Activated CD4-positive, alpha-beta memory T cell treated with anti-CD3 and anti-CD28 coated beads for 36 hours (primary cell): ENCODE measurements at regions of chr1 and their contacts with region 1.

Region 1: GRCh38 chr1:111656086-111657017 is 36.8 kb downstream of the RAP1A start:
- DNase-seq: no peak
- H3K4me3 Mint-ChIP-seq: no peak overlapping the region
- H3K27ac Mint-ChIP-seq: no peak overlapping the region
- H3K4me1 Mint-ChIP-seq: peaks cover 48% of the 10 kb centered on the region
- H3K27me3 Mint-ChIP-seq: no peaks in the 10 kb centered on the region

Region 2: DNA sequence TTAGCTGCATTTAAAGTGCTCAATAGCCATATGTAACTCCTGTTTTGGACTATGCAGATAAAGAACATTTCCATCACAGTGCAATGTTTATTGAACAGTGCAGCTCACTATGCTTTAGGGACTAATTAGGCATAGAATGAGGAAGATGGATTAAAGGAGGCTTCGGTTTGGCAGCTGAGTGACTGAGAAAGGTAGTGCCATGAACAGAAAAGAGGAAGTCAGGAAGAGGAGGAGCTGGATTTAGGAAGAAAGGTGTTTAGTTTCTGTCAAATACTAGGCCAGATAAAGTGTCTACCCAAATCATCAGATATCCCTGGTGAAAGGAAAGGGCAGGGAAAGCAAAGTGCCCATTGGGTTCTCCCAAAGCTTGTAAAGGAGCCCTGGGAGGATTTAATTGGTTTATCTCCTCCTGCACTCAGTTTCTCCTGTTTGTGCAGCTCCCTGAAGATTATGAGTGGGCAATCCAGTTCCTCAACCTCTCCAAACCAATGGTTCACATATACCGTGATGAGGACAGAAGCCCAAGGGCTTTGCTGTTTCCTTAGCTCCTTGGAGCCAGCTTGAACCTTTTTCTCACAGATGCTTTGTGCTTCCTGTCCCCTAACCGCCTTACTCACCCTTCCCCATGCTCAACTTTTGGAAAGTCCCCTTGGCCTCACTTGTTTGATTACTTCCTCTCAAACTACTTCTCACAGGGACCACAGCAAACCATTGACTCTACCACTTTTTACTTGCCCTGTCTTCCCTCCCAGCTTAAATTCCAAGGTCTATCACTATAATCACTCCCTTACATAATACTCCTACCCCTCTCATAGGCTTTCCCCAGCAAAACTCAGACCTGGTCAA is 40.3 kb before region 1 on chr1:
- CTCF ChIA-PET with region 1: no interaction called
- POLR2A ChIA-PET with region 1: no interaction called
- intact Hi-C with region 1: no loop called
- DNase-seq: peak; percentile 74
- H3K4me3 Mint-ChIP-seq: peak overlapping the region; percentile 42
- H3K27ac Mint-ChIP-seq: peak overlapping the region; percentile 92
- H3K4me1 Mint-ChIP-seq: peaks cover 37% of the 10 kb centered on the region
- H3K27me3 Mint-ChIP-seq: no peaks in the 10 kb centered on the region

Region 3: GRCh38 chr1:111628153-111628552 is 28.2 kb before region 1 on chr1:
- CTCF ChIA-PET with region 1: no interaction called
- POLR2A ChIA-PET with region 1: no interaction called
- intact Hi-C with region 1: loop called (anchors 5 kb)
- DNase-seq: no peak
- H3K4me3 Mint-ChIP-seq: peak overlapping the region; percentile 18
- H3K27ac Mint-ChIP-seq: peak overlapping the region; percentile 68
- H3K4me1 Mint-ChIP-seq: peaks cover 82% of the 10 kb centered on the region
- H3K27me3 Mint-ChIP-seq: no peaks in the 10 kb centered on the region

Region 4: GRCh38 chr1:111639602-111640198 is 16.7 kb before region 1 on chr1:
- CTCF ChIA-PET with region 1: no interaction called
- POLR2A ChIA-PET with region 1: interaction called, 3 read pairs
- intact Hi-C with region 1: loop called (anchors 2 kb)
- DNase-seq: no peak
- H3K4me3 Mint-ChIP-seq: no peak overlapping the region
- H3K27ac Mint-ChIP-seq: no peak overlapping the region
- H3K4me1 Mint-ChIP-seq: peaks cover 66% of the 10 kb centered on the region
- H3K27me3 Mint-ChIP-seq: no peaks in the 10 kb centered on the region

Region 5: DNA sequence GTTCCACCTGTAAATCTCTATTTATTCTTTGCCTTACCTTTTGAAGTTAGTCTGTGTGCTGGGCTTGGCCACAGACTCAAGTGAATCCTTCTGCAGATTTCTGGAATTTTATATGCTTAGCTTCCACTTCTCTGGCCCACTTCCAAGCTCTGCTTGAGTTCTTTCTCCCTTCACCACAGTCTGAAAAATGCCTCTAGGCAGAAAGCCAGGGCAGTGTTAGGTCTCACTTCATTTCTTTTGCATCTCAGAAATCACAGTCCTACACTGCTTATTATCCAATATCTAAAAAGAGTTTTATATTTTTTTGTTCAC is 33.9 kb after region 1 on chr1:
- CTCF ChIA-PET with region 1: no interaction called
- POLR2A ChIA-PET with region 1: no interaction called
- intact Hi-C with region 1: no loop called
- DNase-seq: no peak
- H3K4me3 Mint-ChIP-seq: no peak overlapping the region
- H3K27ac Mint-ChIP-seq: no peak overlapping the region
- H3K4me1 Mint-ChIP-seq: peaks cover 55% of the 10 kb centered on the region
- H3K27me3 Mint-ChIP-seq: no peaks in the 10 kb centered on the region

Region 6: GRCh38 chr1:111704776-111705175 is 48.4 kb after region 1 on chr1:
- CTCF ChIA-PET with region 1: no interaction called
- POLR2A ChIA-PET with region 1: no interaction called
- intact Hi-C with region 1: no loop called
- DNase-seq: no peak
- H3K4me3 Mint-ChIP-seq: no peak overlapping the region
- H3K27ac Mint-ChIP-seq: no peak overlapping the region
- H3K4me1 Mint-ChIP-seq: peaks cover 66% of the 10 kb centered on the region
- H3K27me3 Mint-ChIP-seq: no peaks in the 10 kb centered on the region

Region 7: GRCh38 chr1:111739194-111739924 is 83.0 kb after region 1 on chr1 and contains the start of gene INKA2:
- CTCF ChIA-PET with region 1: no interaction called
- POLR2A ChIA-PET with region 1: no interaction called
- intact Hi-C with region 1: no loop called
- DNase-seq: peak; percentile 88
- H3K4me3 Mint-ChIP-seq: peak within 1 kb of the TSS; percentile 84
- H3K27ac Mint-ChIP-seq: no peak within 1 kb of the TSS
- H3K4me1 Mint-ChIP-seq: peaks cover 11% of the 10 kb centered on the region
- H3K27me3 Mint-ChIP-seq: peaks cover 28% of the 10 kb centered on the region
- total RNA-seq, gene INKA2: 1.4 to 2.3 TPM